ENCODE measurements at regions of chr1 and their contacts with region 1.

Region 1: DNA sequence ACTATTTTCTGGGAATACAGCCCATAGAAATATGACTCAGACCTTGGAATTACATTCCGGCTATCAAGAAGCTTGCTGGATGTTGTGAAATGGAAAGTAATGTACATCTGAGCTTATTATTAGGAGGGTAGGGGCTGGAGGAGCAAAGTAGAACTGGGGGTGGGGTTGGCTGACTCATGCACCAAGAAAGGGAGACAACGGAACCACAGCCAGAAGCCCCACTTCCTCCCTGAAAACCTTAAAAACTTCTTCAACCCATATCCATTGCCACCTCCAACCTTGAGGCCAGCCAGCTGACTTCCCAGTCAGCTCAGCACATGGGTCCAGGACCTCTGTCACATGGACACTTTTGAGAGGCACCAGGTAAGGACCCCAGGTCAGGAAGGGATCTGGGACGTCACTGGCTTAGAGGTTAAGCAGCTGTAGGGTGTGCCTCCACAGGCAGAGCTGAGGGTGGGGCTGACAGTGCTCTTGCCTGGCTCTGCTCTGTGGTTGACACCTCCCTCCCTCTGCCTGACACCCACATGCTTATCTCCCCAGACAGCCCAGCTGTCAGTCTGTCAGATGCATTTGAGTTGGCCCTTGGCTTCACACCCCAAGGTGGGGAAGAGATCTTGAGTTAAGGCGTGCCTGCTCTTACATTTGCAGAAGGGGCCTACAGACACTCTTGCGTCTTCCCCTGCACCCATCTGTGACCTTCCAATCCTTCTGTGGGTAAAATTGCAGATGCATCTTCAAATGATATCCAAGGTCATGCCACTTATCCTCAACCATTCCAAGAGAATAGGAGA is 5.7 kb upstream of the ZNF683 start:
- DNase-seq: peak; percentile 47 to 77 (median 70)
- ATAC-seq: peak; percentile 98
- H3K4me3 ChIP-seq: peak overlapping the region; percentile 35
- H3K4me3 Mint-ChIP-seq: peak overlapping the region; percentile 64 to 85 (median 74)
- H3K27ac ChIP-seq: peak overlapping the region; percentile 56
- H3K27ac Mint-ChIP-seq: peak overlapping the region; percentile 48 to 93 (median 92)
- H3K4me1 ChIP-seq: peaks cover 57 to 64% of the 10 kb centered on the region in 2 donors
- H3K4me1 Mint-ChIP-seq: peaks cover 57 to 74% (median 70%) of the 10 kb centered on the region in 7 donors
- H3K27me3 ChIP-seq: no peaks in the 10 kb centered on the region
- H3K27me3 Mint-ChIP-seq: no peaks in the 10 kb centered on the region

Region 2: GRCh38 chr1:24673336-24673735 is 1704.9 kb before region 1 on chr1:
- CTCF ChIA-PET with region 1: no interaction called
- POLR2A ChIA-PET with region 1: no interaction called
- intact Hi-C with region 1: no loop called
- DNase-seq: no peak
- ATAC-seq: no peak
- H3K4me3 ChIP-seq: no peak overlapping the region
- H3K4me3 Mint-ChIP-seq: no peak overlapping the region
- H3K27ac ChIP-seq: no peak overlapping the region
- H3K27ac Mint-ChIP-seq: peak overlapping the region in 2 of 9 donors; percentile 31 to 59
- H3K4me1 ChIP-seq: no peaks in the 10 kb centered on the region
- H3K4me1 Mint-ChIP-seq: peaks cover 0 to 5% (median 0%) of the 10 kb centered on the region in 7 donors
- H3K27me3 ChIP-seq: no peaks in the 10 kb centered on the region
- H3K27me3 Mint-ChIP-seq: no peaks in the 10 kb centered on the region

Region 3: DNA sequence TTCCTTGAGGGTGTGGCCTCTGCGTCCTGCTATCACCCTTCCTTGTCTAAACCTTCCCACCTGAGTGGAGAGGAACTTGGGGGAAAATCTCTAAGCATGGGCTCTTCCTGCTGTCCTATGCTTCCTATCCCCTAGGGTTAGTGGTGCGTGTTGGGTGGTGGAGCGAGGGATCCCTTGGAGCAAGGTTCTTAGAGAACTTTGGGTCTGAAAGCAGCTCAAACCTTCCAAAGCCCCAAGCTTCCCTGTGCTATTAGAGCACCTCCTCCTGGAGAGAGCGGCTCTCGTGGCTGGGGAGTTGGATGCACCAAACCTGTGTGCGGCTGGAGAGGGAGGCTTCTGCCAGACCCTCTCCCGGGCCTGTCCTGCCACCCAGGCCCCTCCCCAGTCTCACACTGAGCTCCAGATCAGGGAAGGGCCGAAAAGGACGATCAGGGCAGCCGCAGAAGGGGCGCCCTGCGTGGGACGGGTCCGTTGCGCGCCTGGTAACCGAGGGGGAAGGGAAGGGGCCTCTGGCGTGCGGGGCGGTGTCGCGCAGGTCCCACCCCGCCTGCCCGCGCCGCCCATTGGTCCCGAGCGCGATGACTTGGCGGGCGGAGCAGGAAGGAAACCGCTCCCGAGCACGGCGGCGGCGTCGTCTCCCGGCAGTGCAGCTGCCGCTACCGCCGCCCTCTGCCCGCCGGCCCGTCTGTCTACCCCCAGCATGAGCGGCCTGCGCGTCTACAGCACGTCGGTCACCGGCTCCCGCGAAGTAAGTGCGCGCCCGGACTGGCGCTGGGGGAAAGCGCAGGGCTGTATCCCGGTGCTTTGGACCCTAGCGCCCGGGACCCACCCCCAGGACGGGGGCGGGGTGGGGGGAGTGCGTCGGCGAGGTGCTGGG is 98.6 kb before region 1 on chr1 and contains the start of gene SH3BGRL3:
- CTCF ChIA-PET with region 1: interaction called, 10 read pairs
- POLR2A ChIA-PET with region 1: interaction called, 24 read pairs
- intact Hi-C with region 1: loop called (anchors 1 to 5 kb)
- DNase-seq: peak; percentile 73 to 89 (median 84)
- ATAC-seq: peak; percentile 77
- H3K4me3 ChIP-seq: peak within 1 kb of the TSS; percentile 58
- H3K4me3 Mint-ChIP-seq: peak within 1 kb of the TSS; percentile 80 to 98 (median 89)
- H3K27ac ChIP-seq: peak within 1 kb of the TSS; percentile 86
- H3K27ac Mint-ChIP-seq: peak within 1 kb of the TSS; percentile 83 to 99 (median 93)
- H3K4me1 ChIP-seq: peaks cover 80 to 82% of the 10 kb centered on the region in 2 donors
- H3K4me1 Mint-ChIP-seq: peaks cover 60 to 85% (median 71%) of the 10 kb centered on the region in 7 donors
- H3K27me3 ChIP-seq: no peaks in the 10 kb centered on the region
- H3K27me3 Mint-ChIP-seq: no peaks in the 10 kb centered on the region
- total RNA-seq, gene SH3BGRL3: 156 to 636 (median 224) TPM

Region 4: GRCh38 chr1:26306290-26307229 is 71.7 kb before region 1 on chr1 and contains the start of gene UBXN11:
- CTCF ChIA-PET with region 1: interaction called, 5 read pairs
- POLR2A ChIA-PET with region 1: interaction called, 10 read pairs
- intact Hi-C with region 1: no loop called
- DNase-seq: peak; percentile 66 to 95 (median 89)
- ATAC-seq: peak; percentile 99
- H3K4me3 ChIP-seq: peak within 1 kb of the TSS; percentile 87
- H3K4me3 Mint-ChIP-seq: peak within 1 kb of the TSS; percentile 93 to 99 (median 98)
- H3K27ac ChIP-seq: peak within 1 kb of the TSS; percentile 76
- H3K27ac Mint-ChIP-seq: peak within 1 kb of the TSS; percentile 90 to 99 (median 96)
- H3K4me1 ChIP-seq: peaks cover 16 to 31% of the 10 kb centered on the region in 2 donors
- H3K4me1 Mint-ChIP-seq: peaks cover 25 to 58% (median 34%) of the 10 kb centered on the region in 7 donors
- H3K27me3 ChIP-seq: no peaks in the 10 kb centered on the region
- H3K27me3 Mint-ChIP-seq: no peaks in the 10 kb centered on the region
- total RNA-seq, gene UBXN11: 35.7 to 131 (median 124) TPM

Region 5: GRCh38 chr1:26363549-26364448 is 14.5 kb before region 1 on chr1:
- CTCF ChIA-PET with region 1: interaction called, 25 read pairs
- POLR2A ChIA-PET with region 1: interaction called, 25 read pairs
- intact Hi-C with region 1: loop called (anchors 1 kb)
- DNase-seq: peak; percentile 71 to 87 (median 82)
- ATAC-seq: peak; percentile 84
- H3K4me3 ChIP-seq: no peak overlapping the region
- H3K4me3 Mint-ChIP-seq: peak overlapping the region in 6 of 10 donors; percentile 39 to 72 (median 40)
- H3K27ac ChIP-seq: no peak overlapping the region
- H3K27ac Mint-ChIP-seq: peak overlapping the region in 4 of 9 donors; percentile 20 to 52 (median 40)
- H3K4me1 ChIP-seq: peaks cover 30 to 44% of the 10 kb centered on the region in 2 donors
- H3K4me1 Mint-ChIP-seq: peaks cover 28 to 53% (median 47%) of the 10 kb centered on the region in 7 donors
- H3K27me3 ChIP-seq: no peaks in the 10 kb centered on the region
- H3K27me3 Mint-ChIP-seq: peaks cover 7 to 37% (median 16%) of the 10 kb centered on the region in 5 donors

Region 6: GRCh38 chr1:26431979-26432695 is 53.9 kb after region 1 on chr1 and contains the start of gene DHDDS:
- CTCF ChIA-PET with region 1: no interaction called
- POLR2A ChIA-PET with region 1: no interaction called
- intact Hi-C with region 1: loop called in 1 of 2 experiments (anchors 1 kb)
- DNase-seq: peak; percentile 95 to 98 (median 97)
- ATAC-seq: peak; percentile 99
- H3K4me3 ChIP-seq: peak within 1 kb of the TSS; percentile 88
- H3K4me3 Mint-ChIP-seq: peak within 1 kb of the TSS; percentile 92 to 99 (median 96)
- H3K27ac ChIP-seq: peak within 1 kb of the TSS; percentile 76
- H3K27ac Mint-ChIP-seq: peak within 1 kb of the TSS; percentile 90 to 99 (median 93)
- H3K4me1 ChIP-seq: peaks cover 11 to 15% of the 10 kb centered on the region in 2 donors
- H3K4me1 Mint-ChIP-seq: peaks cover 14 to 26% (median 22%) of the 10 kb centered on the region in 7 donors
- H3K27me3 ChIP-seq: no peaks in the 10 kb centered on the region
- H3K27me3 Mint-ChIP-seq: peaks cover 0 to 15% (median 0%) of the 10 kb centered on the region in 5 donors
- total RNA-seq, gene DHDDS: 28.1 to 58.9 (median 37.7) TPM